Left colon (tissue), 2 donors: ENCODE measurements at regions of chr12 and their contacts with region 1.

Region 1: DNA sequence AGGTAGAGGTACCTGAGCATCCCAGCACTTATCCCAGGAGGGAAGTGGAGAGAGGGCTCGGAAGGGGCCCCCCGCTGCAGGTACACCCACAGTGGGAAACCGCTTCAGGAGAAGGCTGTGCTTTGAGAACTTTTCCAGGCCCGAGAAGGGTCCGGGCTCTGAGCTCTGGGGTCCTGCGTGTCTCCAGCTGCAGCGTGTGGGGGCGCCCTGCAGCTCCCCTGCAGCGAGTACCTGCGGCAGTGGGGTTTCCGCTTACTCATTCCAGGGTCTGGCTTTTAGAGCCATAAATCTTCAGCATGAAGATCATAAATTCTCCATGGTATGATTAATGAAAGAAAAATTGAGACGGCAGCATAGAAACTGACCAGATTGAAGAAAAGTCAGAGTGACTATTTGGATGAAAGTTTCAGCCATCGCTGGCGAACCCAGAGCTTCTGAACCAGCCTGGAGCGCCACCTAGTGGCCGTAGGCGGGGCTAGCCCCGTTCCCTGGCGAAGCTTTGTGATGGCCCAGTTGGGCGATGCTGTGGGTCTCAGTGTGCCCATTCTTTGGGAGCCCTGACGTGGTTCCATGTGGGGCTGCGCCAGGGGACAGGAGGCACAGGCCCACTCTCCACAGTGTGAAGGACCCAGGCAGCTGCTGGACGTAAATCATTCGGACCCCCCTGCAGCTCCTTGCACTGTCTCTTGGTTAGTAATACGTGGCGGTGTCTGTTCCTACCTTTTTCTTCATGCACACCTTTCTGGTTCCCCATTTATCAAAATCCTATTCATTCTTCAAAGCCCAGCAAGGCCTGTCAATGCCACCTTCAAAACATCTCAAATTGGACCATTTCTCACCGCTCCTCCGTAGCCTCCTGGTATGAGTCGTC is 198.2 kb downstream of the TSPAN9 start:
- DNase-seq: peak in 1 of 2 donors; percentile 79
- ATAC-seq: peak; percentile 77

Region 2: GRCh38 chr12:3073438-3074250 is 201.8 kb before region 1 on chr12:
- intact Hi-C with region 1: loop called (anchors 10 kb)
- DNase-seq: peak; percentile 59 to 88
- ATAC-seq: peak; percentile 50

Region 3: GRCh38 chr12:3135522-3136461 is 139.6 kb before region 1 on chr12:
- intact Hi-C with region 1: loop called (anchors 5 kb)
- DNase-seq: peak in 1 of 2 donors; percentile 23
- ATAC-seq: peak; percentile 79